ENCODE measurements at regions of chr14 and their contacts with region 1.

Region 1: DNA sequence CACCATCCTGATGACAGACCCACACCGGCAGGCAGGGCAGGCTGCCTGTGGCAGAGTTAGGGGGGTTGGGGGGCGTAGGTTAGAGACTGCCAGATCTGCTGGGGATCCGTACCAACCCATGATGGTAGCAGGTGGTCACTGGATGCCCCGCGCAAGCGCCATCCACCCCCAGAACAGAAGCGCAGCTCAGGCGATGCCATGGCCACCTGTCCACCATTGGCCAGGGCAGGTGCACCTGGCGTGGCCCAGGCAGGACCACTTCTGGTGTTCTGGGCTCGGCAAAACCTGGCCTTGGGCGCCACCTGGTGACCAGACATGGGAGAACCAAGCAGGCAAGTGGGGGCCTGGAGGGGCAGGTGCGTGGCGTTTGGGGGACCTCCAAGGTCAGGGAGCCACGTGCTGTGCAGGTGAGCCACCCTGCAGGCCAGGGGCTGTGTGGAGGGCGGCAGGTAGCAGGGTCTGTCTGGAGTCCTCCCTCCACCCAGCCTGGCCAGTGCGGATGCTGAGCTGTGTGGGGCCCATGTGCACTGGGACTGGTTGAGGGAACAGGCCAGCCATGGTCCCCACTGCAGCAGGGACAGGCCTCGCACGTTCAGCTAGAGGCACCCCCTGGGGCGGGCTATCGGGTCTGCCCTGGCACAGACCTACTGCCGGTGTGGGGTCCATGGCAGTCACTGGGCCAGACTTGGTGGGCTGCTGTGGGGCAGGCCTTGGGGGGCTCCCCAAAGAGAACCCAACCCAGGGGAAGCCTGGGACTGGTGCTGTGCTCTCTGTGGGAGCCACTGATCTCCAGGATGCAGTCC is 15.6 kb downstream of the BAG5 start:
- DNase-seq: peak; percentile 91
- CTCF ChIP-seq: peak; percentile 94

Region 2: DNA sequence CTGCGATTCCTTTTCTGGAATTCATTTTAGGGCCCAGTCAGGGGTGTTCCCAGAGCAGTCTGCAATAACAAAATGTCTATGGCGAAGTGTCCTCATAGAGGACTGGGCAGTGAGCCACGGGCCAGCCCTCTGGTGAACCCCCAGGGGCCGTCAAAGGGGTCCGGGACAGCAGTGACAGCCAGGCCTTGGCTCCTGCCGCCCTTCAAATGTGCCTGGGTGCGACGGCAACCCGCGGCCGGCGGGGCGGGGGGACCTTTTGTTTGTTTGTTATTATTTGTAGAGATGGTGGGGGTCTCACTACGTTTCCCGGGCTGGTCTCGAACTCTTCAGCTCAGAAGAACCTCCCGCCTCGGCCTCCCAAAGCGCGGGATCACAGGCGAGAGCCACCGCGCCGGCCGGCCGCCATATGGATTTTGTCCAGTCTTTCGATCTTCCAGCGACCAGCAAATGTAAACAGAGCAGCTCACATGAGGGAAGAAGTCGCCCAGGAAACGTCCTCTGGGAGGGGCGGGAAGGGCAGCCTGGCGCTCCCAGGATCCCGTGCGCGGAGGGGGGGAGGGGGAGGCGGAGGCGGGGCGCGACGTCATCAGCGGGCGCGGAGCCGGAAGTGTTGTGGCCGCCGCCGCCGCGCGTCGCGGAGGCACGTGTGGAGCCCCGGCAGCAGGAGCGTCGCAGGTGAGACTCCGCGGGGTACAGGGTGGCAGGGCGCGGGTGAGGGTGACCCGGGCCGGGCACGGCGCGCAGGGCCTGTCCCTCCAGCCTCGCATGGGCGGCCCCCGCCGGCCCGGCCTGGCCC is 18.1 kb before region 1 on chr14 and contains the start of gene TRMT61A:
- CTCF ChIA-PET with region 1: interaction called, 11 read pairs
- POLR2A ChIA-PET with region 1: no interaction called
- DNase-seq: peak; percentile 95
- CTCF ChIP-seq: no peak

Region 3: DNA sequence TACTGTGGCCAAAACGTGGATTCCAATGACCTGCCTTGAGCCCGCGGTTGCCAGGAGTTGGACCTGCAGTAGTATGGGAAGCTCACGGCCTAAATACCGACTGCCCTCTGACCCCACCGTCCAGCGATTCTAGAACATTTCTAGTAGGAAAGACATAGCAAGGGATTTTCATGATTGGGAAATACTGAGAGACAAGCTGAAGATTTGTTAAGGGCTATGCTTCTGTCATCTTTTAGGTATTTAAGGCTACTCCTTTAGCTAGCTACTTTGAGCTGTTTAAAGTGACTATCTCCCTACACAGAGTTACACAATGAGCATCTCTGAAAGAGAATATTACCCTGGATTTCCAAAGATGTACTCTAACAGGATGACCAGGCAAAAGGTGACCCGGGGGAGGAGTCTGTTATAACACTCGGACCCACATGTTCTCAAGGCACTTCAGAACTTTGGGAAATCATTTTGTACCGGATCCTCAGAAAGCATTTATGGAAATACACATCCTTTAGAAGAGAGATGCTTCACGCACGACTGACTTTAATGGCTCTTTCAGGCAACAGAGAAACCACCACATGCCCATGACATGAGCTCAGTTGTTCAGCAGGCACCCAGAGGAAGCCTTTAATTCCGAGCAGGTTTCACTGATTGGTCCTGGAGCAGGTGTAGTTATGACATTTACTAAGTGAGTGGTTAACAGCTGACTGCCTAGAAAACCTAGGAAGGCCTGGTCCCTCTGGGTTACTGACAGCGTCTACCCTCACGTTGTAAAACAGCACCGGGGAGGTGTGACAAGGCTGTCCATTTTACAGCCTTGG is 11.4 kb after region 1 on chr14:
- CTCF ChIA-PET with region 1: interaction called, 20 read pairs
- POLR2A ChIA-PET with region 1: no interaction called
- DNase-seq: no peak
- CTCF ChIP-seq: no peak

Region 4: DNA sequence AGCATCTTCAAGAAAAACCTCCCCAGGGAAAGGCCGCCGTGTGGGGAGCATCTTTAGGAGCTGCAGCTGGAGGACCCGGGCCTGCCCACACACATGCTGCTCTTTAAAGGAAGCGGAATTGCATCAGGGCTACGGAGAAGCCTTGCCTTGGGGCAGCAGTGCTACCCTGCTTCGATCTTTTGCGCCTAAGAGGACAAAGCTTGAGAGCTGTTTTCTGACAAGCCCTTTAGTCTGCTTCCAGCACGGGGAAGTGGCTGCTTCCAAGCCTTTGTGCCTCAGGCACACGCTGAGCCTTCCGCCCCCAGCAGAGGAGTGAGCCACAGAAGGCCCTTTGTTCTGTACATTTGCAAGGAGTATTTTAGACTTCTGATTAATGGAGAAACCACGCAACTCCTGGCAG is 47.4 kb after region 1 on chr14:
- CTCF ChIA-PET with region 1: no interaction called
- POLR2A ChIA-PET with region 1: no interaction called
- DNase-seq: no peak
- CTCF ChIP-seq: no peak

Region 5: GRCh38 chr14:104184911-104185499 is 638.2 kb after region 1 on chr14:
- CTCF ChIA-PET with region 1: no interaction called
- POLR2A ChIA-PET with region 1: no interaction called
- DNase-seq: no peak
- CTCF ChIP-seq: no peak

Measured in GM10248 (cell line).